H1 (cell line): ENCODE measurements at regions of chr17 and their contacts with region 1.

Region 1: DNA sequence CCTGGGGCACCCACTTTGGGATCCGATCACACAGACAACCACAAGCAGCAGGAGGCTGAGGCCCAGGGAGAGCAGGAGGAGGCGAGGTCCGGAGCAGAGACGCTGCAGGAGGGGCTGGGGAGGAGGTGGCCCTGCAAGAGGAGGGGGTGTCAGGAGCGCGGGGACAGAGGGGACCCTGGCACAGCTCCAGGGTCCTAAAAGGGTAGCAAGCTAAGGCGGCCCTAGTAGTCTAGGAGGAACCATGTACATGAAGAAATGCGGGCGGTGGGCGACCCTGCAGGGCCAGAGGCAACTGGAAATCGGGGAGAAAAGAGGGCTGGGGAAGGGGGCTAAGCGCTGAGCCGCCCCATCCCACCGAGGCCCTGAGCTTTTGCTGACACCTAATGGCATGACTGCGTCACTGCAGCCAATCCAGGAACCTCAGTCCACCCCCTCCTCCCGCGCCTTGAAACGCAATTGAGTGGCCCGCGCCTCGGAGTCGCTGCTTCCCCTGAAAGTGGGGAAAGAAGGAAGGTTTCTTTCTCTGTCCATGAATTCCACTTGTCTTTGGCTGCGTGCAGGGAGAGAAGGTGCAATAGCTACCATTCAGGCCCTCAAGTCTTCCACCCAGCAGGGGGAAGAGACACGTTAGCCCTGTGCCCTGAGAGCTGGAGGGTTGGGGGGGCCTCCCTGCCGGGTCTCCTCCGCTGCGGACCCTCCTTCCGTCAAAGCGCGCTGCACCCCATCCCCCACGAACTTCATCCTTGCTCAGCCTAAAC is 1.8 kb downstream of the ASGR1 start:
- DNase-seq: peak in 1 of 2 experiments; percentile 90
- H3K4me3 ChIP-seq: peak overlapping the region; percentile 52 to 86 (median 58)
- H3K27ac ChIP-seq: no peak overlapping the region
- H3K4me1 ChIP-seq: peaks cover 0 to 23% (median 11%) of the 10 kb centered on the region in 4 experiments; a peak in 6 of 7 replicates
- H3K27me3 ChIP-seq: peaks cover 0 to 28% (median 21%) of the 10 kb centered on the region in 4 experiments; a peak in 6 of 7 replicates
- CTCF ChIP-seq: peak; percentile 76 to 92 (median 91)
- EP300 ChIP-seq: peak in 1 of 2 experiments; percentile 52; a peak in 1 of 3 replicates
- POLR2A ChIP-seq: peak in 1 of 2 experiments; percentile 28; a peak in 1 of 3 replicates
- RAD21 ChIP-seq: peak; percentile 84

Region 2: DNA sequence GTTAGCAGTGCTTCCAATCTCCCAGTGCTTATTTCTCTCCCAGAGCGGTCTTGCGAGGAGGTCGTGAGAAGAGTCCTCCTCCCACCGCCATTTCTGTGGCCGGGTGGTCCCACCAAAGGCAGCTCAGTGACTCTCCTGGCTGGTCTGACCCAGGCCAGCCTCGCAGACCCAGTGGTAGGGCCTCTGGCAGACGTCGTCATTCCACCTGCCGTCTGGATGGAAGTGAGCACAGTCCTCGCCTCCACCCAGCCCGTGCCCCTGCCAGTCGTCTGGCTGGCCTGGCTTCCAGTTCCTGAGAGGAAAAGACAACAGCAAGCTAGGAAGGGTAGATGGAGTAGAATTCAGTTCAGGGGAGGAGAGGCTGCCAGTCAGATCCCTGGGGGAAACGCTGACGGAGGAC is 102.4 kb before region 1 on chr17:
- CTCF ChIA-PET with region 1: interaction called, 10 read pairs
- POLR2A ChIA-PET with region 1: no interaction called
- DNase-seq: no peak
- H3K4me3 ChIP-seq: no peak overlapping the region
- H3K27ac ChIP-seq: no peak overlapping the region
- H3K4me1 ChIP-seq: no peaks in the 10 kb centered on the region
- H3K27me3 ChIP-seq: no peaks in the 10 kb centered on the region
- CTCF ChIP-seq: no peak
- EP300 ChIP-seq: no peak
- POLR2A ChIP-seq: no peak
- RAD21 ChIP-seq: no peak

Region 3: DNA sequence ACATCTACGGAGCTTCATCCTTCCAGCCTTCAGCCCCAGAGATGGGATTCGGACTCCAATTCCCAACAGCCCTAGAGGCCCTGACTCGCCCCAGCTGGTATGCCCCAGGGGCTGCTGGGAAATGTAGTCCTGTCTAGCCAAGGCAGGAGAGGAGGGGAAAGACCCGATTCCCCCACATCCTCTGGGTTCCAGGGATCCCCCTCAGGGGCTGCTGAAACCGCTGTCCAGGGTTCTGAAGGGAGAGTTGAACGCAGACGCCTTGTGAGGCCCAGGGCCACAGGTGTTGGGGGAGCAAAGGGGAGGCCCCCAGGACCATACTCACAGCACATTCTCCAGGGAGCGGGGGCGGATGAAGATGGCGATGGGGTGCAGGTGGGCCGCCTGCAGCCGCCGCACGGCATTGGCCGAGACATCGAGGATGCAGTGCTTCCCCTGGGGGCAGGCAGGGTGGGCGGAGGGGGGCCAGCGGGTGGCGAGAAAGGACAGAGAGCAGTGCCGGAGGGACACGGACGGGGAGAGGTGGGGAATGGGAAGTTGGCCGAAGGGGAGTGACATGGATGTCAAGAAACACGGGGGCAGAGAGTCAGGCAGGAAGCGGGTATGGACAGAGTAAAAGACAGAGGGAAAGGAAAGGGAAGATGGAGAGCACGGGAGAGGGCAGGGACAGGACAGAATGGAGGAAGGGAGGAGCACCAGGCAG is 14.3 kb after region 1 on chr17:
- CTCF ChIA-PET with region 1: interaction called, 13 read pairs
- POLR2A ChIA-PET with region 1: interaction called, 15 read pairs
- DNase-seq: peak; percentile 53 to 86
- H3K4me3 ChIP-seq: no peak overlapping the region
- H3K27ac ChIP-seq: no peak overlapping the region
- H3K4me1 ChIP-seq: no peaks in the 10 kb centered on the region
- H3K27me3 ChIP-seq: no peaks in the 10 kb centered on the region
- CTCF ChIP-seq: no peak
- EP300 ChIP-seq: no peak; a peak in 1 of 3 replicates
- POLR2A ChIP-seq: no peak
- RAD21 ChIP-seq: no peak

Region 4: GRCh38 chr17:7207120-7208001 is 30.0 kb after region 1 on chr17:
- CTCF ChIA-PET with region 1: interaction called, 10 read pairs
- POLR2A ChIA-PET with region 1: interaction called, 6 read pairs
- DNase-seq: no peak
- H3K4me3 ChIP-seq: peak overlapping the region; percentile 36 to 62 (median 42); a peak in 7 of 8 replicates
- H3K27ac ChIP-seq: no peak overlapping the region
- H3K4me1 ChIP-seq: peaks cover 8 to 42% (median 32%) of the 10 kb centered on the region in 4 experiments
- H3K27me3 ChIP-seq: no peaks in the 10 kb centered on the region; a peak in 1 of 7 replicates
- CTCF ChIP-seq: no peak
- EP300 ChIP-seq: no peak
- POLR2A ChIP-seq: no peak
- RAD21 ChIP-seq: no peak